Esophagus muscularis mucosa (tissue), 4 donors: ENCODE measurements at regions of chr12 and their contacts with region 1.

Region 1: GRCh38 chr12:104137913-104138796 is at the start of gene NFYB:
- DNase-seq: peak; percentile 98
- H3K4me3 ChIP-seq: peak within 1 kb of the TSS; percentile 78 to 86 (median 84)
- H3K27ac ChIP-seq: peak within 1 kb of the TSS; percentile 94 to 97 (median 95)
- H3K4me1 ChIP-seq: peaks cover 24 to 53% (median 51%) of the 10 kb centered on the region in 4 donors
- H3K27me3 ChIP-seq: no peaks in the 10 kb centered on the region
- CTCF ChIP-seq: no peak
- EP300 ChIP-seq: no peak
- POLR2A ChIP-seq: peak; percentile 20
- total RNA-seq, gene NFYB: 67.7 to 90.9 (median 82.4) TPM

Region 2: DNA sequence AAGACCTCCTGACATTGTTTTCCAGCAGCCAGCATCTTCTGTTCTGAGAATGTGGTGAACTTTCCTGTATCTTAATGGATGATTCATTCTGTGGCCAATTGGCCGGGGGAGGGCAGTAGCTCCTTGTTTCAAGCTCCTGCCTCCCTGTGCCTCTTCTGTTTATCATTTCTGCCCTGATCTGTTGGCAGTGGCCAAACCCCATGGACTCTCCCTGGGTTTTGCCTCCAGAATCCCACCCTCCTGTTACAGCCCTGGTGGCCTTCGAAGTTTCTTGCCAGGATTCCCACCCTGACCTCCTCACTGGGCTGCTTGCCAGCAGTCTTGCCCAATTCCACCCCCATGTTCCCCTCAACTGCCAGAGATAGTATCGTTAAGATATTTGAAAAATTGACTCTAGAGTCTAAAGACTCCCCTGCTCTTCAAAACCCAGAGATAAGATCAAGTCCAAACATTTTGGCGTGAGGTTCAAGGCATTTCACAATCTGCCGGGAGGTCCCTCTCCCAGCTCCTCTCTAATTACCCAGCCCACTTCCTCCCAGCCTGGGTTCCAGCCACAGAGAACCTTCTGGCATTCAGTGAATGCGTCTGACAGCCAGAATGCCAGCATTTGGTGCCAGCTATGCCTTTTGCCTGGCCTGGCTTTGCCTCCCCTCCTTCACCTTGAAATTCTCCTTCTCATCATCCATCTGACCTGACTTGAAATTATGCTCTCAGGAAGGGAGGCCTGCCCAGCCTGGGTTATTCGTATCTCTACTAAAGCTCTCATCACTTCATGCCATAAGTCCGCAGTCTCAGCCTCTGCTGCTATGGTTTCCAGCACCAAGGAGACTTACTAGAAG is 39.7 kb after region 1 on chr12:
- intact Hi-C with region 1: loop called (anchors 2 kb)
- DNase-seq: peak; percentile 96
- H3K4me3 ChIP-seq: peak overlapping the region in 1 of 4 donors; percentile 5
- H3K27ac ChIP-seq: peak overlapping the region; percentile 79 to 91 (median 86)
- H3K4me1 ChIP-seq: peaks cover 32 to 68% (median 62%) of the 10 kb centered on the region in 4 donors
- H3K27me3 ChIP-seq: no peaks in the 10 kb centered on the region
- CTCF ChIP-seq: peak; percentile 40 to 51 (median 43)
- EP300 ChIP-seq: peak; percentile 90
- POLR2A ChIP-seq: no peak